ENCODE measurements at regions of chr22 and their contacts with region 1.

Region 1: GRCh38 chr22:50357776-50358175 is 14.6 kb downstream of the PPP6R2 start:
- DNase-seq: no peak

Region 2: GRCh38 chr22:50282361-50282760 is 75.4 kb before region 1 on chr22:
- in situ Hi-C with region 1: loop called (anchors 10 kb)
- DNase-seq: no peak

Region 3: DNA sequence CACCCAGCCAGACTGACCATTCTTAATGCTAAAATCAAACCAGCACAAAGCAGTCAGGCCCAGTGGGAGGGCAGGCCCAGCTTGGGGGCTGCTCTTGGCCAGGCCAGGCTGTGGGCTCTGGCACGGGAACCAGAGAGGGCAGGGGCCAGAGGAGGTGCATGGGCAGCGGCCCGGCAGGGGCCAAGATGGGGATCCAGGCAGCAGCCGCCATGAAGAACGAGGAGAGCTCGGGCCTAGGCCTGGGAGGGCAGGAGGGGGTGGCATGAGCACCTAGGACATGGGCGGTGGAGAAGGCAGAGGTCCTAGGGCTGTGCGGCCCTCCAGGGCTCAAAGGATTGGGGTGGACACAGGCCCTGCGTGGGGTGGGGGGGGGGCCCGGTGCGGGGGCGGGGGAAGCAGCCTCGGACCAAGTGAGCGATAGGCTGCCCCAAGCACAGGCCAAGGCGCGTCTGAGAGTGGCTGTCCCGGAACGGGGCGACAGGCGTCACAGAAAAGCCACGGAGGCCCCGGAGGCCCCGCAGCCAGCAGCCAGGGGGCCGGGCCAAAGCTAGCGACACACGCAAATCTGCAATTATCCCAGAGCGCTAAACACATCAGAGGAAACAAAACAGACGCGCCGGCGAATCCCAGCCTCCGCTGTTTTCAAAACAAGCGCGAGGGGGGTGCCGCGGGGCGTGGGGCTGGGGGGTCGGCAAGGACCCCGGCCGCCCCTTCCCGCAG is 58.7 kb before region 1 on chr22:
- in situ Hi-C with region 1: no loop called
- DNase-seq: peak; percentile 37

Region 4: DNA sequence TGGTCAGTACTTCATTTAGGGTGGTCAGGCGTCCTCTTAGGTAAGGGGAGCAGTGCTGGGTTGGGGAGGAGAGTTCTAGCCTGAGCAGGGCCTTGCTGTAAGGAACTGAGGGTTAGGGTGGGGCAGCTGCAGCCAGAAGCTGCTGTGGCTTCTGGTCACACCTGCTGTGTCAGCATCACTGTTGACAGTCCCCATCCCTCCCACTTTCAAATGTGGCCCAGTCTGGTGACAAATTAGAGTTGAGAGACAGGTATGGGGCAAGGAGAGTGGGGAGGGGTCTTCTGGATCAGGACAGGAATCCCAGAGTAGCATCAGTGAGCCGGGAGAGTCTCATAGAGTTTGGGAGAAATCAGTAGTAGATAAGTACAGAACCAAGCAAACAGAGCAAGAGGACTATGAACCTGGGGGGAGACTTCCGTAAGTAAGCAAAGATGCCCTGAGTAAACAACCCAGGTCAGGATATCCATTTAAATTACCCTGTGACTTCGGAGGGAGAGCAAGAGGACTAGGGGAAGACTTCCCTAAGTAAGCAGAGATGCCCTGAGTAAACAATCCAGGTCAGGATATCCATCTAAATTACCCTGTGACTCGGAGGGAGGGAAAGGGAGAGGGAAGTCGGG is 39.1 kb after region 1 on chr22:
- in situ Hi-C with region 1: no loop called
- DNase-seq: no peak

Region 5: DNA sequence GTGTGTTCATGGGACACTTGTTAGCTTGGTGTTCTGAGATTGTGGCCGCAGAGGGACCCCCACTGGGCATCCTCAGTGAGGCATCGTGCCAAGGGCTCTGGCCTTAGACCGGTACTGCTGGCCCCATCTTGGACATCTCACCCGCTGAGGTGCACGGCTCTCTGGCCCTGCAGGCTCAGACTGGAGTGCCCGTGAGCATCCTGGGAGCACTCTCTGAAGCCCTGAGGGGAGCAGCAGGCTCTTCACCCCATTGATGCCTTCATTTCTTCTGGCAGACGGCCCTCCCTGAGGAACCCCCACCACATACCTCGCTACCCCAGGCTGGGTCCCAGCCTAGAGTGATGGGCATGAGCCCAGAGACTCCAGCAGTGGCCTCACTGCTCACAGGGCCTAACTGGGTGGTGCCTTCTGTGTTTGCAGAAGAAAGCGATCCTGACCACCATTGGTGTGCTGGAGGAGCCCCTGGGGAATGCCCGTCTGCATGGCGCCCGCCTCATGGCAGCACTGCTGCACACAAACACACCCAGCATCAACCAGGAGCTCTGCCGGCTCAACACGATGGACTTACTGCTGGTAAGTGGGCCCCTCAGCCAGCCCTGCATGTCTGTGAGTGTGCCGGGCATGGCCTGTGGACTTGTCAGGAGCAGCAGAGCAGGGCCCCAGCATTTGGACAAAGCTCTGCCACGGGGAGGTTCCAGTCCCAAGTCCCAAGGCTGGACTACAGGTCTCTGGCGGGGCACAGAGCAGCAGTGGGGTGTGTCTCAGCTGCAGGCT is 65.5 kb after region 1 on chr22:
- in situ Hi-C with region 1: loop called (anchors 10 kb)
- DNase-seq: no peak

Measured in G401 (cell line).